ENCODE measurements at regions of chr13 and their contacts with region 1.

Region 1: DNA sequence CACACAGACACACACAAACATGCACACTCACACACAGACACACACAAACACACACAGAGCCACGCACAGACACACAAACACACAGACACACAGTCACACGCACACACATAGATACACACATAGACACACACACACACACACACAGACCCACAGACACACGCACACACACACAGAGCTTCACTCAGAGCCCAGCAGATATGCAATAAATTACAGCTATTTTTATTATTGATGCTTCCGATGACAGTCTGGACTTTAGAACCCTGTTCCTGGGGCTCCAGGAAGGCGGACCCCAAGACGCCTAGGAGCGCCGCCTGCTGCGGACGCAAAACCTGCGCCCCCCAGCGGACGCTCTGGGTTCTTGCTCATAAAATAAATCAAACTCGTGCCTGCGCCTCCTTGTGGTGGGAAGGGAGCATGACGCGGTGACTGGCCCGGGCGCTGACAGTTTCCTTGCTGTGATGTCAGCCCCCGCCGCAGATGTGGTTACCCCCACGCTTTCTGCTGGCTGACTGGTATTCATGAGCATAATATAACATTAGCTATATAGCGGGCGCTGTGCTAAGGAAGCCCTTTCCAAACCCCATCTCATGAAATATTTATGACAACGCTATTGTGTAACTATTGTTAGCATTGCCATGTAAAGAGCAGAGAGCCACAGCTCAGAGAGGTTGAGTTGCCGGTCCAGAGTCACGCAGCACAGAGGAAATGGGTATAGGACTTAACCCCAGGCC is 64.4 kb upstream of the TM9SF2 start:
- DNase-seq: peak; percentile 92 to 98 (median 95)
- ATAC-seq: peak; percentile 50
- H3K4me3 ChIP-seq: no peak overlapping the region
- H3K4me3 Mint-ChIP-seq: peak overlapping the region; percentile 63
- H3K27ac ChIP-seq: peak overlapping the region; percentile 27 to 33
- H3K27ac Mint-ChIP-seq: peak overlapping the region; percentile 55
- H3K4me1 ChIP-seq: peaks cover 57% of the 10 kb centered on the region
- H3K4me1 Mint-ChIP-seq: peaks cover 52% of the 10 kb centered on the region
- H3K27me3 ChIP-seq: no peaks in the 10 kb centered on the region
- H3K27me3 Mint-ChIP-seq: no peaks in the 10 kb centered on the region
- CTCF ChIP-seq: peak; percentile 99

Region 2: GRCh38 chr13:97904059-97904458 is 1532.8 kb before region 1 on chr13:
- CTCF ChIA-PET with region 1: no interaction called
- POLR2A ChIA-PET with region 1: no interaction called
- intact Hi-C with region 1: no loop called
- DNase-seq: no peak
- ATAC-seq: no peak
- H3K4me3 ChIP-seq: no peak overlapping the region
- H3K4me3 Mint-ChIP-seq: no peak overlapping the region
- H3K27ac ChIP-seq: no peak overlapping the region
- H3K27ac Mint-ChIP-seq: no peak overlapping the region
- H3K4me1 ChIP-seq: no peaks in the 10 kb centered on the region
- H3K4me1 Mint-ChIP-seq: no peaks in the 10 kb centered on the region
- H3K27me3 ChIP-seq: no peaks in the 10 kb centered on the region
- H3K27me3 Mint-ChIP-seq: peaks cover 24% of the 10 kb centered on the region
- CTCF ChIP-seq: no peak

Region 3: DNA sequence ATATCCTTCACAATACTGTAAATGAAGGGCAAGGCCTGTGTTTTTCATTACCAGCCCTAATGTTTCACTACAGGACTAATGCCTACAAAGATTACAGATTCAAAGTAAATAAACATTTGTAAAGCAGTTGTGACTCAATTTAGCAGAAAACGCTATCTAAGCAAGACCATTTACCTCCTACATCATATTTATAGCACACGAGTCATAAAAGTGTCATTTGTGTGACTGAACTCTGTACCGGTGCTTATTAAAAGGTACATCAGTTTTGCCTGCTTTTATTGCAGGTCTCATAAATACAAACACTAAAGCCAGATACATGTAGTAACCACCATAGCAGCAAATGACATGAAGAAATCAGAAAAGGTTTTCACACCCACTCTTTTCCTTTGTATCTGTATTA is 622.9 kb before region 1 on chr13:
- CTCF ChIA-PET with region 1: no interaction called
- POLR2A ChIA-PET with region 1: no interaction called
- intact Hi-C with region 1: no loop called
- DNase-seq: no peak
- ATAC-seq: no peak
- H3K4me3 ChIP-seq: no peak overlapping the region
- H3K4me3 Mint-ChIP-seq: no peak overlapping the region
- H3K27ac ChIP-seq: no peak overlapping the region
- H3K27ac Mint-ChIP-seq: no peak overlapping the region
- H3K4me1 ChIP-seq: no peaks in the 10 kb centered on the region
- H3K4me1 Mint-ChIP-seq: no peaks in the 10 kb centered on the region
- H3K27me3 ChIP-seq: no peaks in the 10 kb centered on the region
- H3K27me3 Mint-ChIP-seq: no peaks in the 10 kb centered on the region
- CTCF ChIP-seq: no peak

Region 4: DNA sequence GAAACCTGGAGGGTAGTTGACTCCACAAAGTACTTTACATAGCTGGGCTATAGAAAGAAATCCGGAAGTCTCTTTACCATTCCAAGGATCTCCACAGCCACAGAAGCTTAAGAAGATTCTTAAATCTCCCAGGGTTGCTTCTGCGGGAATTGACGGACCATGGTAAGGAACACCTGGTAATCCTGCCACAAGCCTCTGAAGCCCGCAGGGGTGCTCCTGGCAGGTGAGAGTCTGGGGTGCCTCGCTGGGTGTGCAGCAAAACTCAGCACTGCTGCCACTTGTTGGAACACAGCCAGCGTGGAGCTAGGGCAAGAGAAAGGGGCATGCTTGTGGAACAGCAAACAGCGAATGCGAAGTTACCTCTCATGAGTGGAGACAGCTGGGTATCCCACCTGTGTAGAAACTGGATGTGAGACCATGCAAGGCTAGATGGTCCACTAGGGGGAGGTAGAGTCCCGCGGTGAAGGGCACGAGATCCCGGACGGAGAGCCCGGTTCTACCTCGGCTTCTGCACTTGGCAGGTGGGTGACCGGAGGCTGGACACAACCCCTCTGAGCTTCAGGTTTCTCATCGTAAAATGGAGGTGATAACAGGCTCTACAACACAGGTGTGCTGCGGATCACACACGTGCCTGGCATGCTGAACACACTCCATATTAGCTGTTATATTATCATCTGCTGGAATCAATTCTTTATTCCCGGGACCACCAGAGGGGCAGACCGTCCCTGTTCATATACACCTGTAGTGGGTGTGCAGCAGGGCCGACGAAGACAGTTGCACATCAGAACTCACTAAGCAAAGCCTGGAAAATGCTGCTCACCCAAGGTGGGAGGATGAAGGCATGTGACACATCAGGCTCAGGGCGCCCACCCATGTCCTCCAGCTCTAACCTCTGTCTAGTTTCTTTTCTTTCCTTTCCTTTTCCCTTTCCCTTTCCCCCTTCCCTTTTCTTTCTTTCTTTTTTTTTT is 260.3 kb before region 1 on chr13:
- CTCF ChIA-PET with region 1: interaction called, 66 read pairs
- POLR2A ChIA-PET with region 1: no interaction called
- intact Hi-C with region 1: loop called (anchors 1 to 2 kb)
- DNase-seq: peak; percentile 58 to 87 (median 82)
- ATAC-seq: peak; percentile 93
- H3K4me3 ChIP-seq: peak overlapping the region in 1 of 2 experiments; percentile 25
- H3K4me3 Mint-ChIP-seq: peak overlapping the region; percentile 72
- H3K27ac ChIP-seq: no peak overlapping the region
- H3K27ac Mint-ChIP-seq: peak overlapping the region; percentile 64
- H3K4me1 ChIP-seq: peaks cover 43% of the 10 kb centered on the region
- H3K4me1 Mint-ChIP-seq: peaks cover 45% of the 10 kb centered on the region
- H3K27me3 ChIP-seq: no peaks in the 10 kb centered on the region
- H3K27me3 Mint-ChIP-seq: no peaks in the 10 kb centered on the region
- CTCF ChIP-seq: peak; percentile 80

Region 5: GRCh38 chr13:99296398-99296797 is 140.5 kb before region 1 on chr13:
- CTCF ChIA-PET with region 1: interaction called, 22 read pairs
- POLR2A ChIA-PET with region 1: interaction called, 3 read pairs
- intact Hi-C with region 1: no loop called
- DNase-seq: peak in 2 of 9 experiments; percentile 48 to 70
- ATAC-seq: peak; percentile 80
- H3K4me3 ChIP-seq: peak overlapping the region; percentile 1 to 2
- H3K4me3 Mint-ChIP-seq: peak overlapping the region; percentile 78
- H3K27ac ChIP-seq: peak overlapping the region in 1 of 2 experiments; percentile 49
- H3K27ac Mint-ChIP-seq: peak overlapping the region; percentile 93
- H3K4me1 ChIP-seq: peaks cover 64% of the 10 kb centered on the region
- H3K4me1 Mint-ChIP-seq: peaks cover 81% of the 10 kb centered on the region
- H3K27me3 ChIP-seq: no peaks in the 10 kb centered on the region
- H3K27me3 Mint-ChIP-seq: no peaks in the 10 kb centered on the region
- CTCF ChIP-seq: no peak

Region 6: DNA sequence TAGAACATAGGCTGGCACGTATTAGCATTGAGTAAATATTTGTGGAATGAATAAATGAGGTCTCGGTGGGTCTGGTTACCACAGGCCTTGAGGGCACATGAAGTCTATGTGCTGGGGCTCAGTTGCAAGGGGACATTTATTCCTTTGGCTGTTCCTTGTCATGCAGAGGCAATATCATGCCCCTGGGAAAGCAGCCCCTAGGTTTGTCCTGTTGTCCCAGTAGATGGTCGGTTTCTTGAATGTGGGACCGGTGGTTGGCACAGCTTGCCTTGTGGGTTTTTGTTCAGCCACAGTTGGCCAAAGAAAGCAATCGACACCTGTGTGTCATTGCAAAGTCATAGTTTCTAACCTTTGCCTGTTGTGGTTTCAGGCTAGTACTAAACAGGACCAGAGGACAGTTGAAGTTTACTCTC is 105.0 kb before region 1 on chr13:
- CTCF ChIA-PET with region 1: interaction called, 15 read pairs
- POLR2A ChIA-PET with region 1: no interaction called
- intact Hi-C with region 1: no loop called
- DNase-seq: no peak
- ATAC-seq: no peak
- H3K4me3 ChIP-seq: no peak overlapping the region
- H3K4me3 Mint-ChIP-seq: no peak overlapping the region
- H3K27ac ChIP-seq: no peak overlapping the region
- H3K27ac Mint-ChIP-seq: peak overlapping the region; percentile 56
- H3K4me1 ChIP-seq: peaks cover 11% of the 10 kb centered on the region
- H3K4me1 Mint-ChIP-seq: peaks cover 48% of the 10 kb centered on the region
- H3K27me3 ChIP-seq: no peaks in the 10 kb centered on the region
- H3K27me3 Mint-ChIP-seq: no peaks in the 10 kb centered on the region
- CTCF ChIP-seq: no peak

Region 7: DNA sequence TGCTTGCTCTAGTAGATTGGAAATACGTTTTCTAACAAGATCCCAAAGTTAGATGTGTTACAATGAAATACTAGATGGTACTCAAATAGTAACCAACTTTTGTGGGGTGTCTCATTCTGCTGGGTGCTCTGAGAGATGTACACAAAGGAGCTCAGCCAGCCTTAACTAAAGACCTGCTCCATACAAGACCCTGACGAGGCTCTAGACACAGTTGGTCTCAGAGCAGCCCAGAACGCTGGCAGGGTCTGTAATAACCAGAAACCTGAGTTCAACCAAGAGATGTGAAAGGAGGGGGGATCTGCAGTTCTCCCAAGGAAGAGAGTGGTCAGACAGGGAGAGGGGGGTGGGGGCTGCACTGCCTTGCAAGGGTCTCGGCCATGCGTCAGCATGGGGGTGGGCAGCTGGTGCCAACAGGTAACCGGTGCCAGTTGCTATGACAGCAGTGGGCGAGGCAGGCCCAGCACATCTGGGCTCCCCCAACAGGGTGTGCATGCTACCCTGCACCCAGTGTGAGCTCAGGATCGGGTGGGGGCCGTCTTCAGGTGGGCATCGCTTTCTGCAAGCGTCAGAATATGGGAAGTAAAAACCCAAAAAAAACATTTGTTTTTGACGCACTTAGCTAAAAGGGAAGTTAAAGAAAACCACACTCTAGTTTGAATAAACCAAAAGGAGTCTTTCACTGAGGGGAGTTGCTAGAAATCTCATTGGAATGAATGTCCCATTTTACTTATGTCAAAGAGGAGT is 61.7 kb before region 1 on chr13:
- CTCF ChIA-PET with region 1: interaction called, 20 read pairs
- POLR2A ChIA-PET with region 1: no interaction called
- intact Hi-C with region 1: no loop called
- DNase-seq: peak in 8 of 9 experiments; percentile 60 to 91 (median 80)
- ATAC-seq: peak; percentile 89
- H3K4me3 ChIP-seq: peak overlapping the region in 1 of 2 experiments; percentile 18
- H3K4me3 Mint-ChIP-seq: peak overlapping the region; percentile 61
- H3K27ac ChIP-seq: peak overlapping the region; percentile 55 to 85
- H3K27ac Mint-ChIP-seq: peak overlapping the region; percentile 97
- H3K4me1 ChIP-seq: peaks cover 75% of the 10 kb centered on the region
- H3K4me1 Mint-ChIP-seq: peaks cover 92% of the 10 kb centered on the region
- H3K27me3 ChIP-seq: no peaks in the 10 kb centered on the region
- H3K27me3 Mint-ChIP-seq: no peaks in the 10 kb centered on the region
- CTCF ChIP-seq: no peak

Region 8: GRCh38 chr13:99417201-99418102 is 19.4 kb before region 1 on chr13:
- CTCF ChIA-PET with region 1: interaction called, 117 read pairs
- POLR2A ChIA-PET with region 1: interaction called, 9 read pairs
- intact Hi-C with region 1: loop called (anchors 1 kb)
- DNase-seq: peak in 4 of 9 experiments; percentile 43 to 77 (median 64)
- ATAC-seq: peak; percentile 36
- H3K4me3 ChIP-seq: peak overlapping the region; percentile 35 to 57
- H3K4me3 Mint-ChIP-seq: no peak overlapping the region
- H3K27ac ChIP-seq: peak overlapping the region; percentile 43 to 60
- H3K27ac Mint-ChIP-seq: no peak overlapping the region
- H3K4me1 ChIP-seq: peaks cover 96% of the 10 kb centered on the region
- H3K4me1 Mint-ChIP-seq: peaks cover 63% of the 10 kb centered on the region
- H3K27me3 ChIP-seq: no peaks in the 10 kb centered on the region
- H3K27me3 Mint-ChIP-seq: no peaks in the 10 kb centered on the region
- CTCF ChIP-seq: no peak